ENCODE measurements at regions of chr6 and their contacts with region 1.

Region 1: GRCh38 chr6:111259089-111259831 is 172.0 kb downstream of the SLC16A10 start:
- DNase-seq: peak; percentile 98 to 100 (median 99)
- ATAC-seq: peak; percentile 96
- H3K4me3 ChIP-seq: peak overlapping the region; percentile 68 to 82
- H3K4me3 Mint-ChIP-seq: peak overlapping the region; percentile 86
- H3K27ac ChIP-seq: peak overlapping the region; percentile 90
- H3K27ac Mint-ChIP-seq: peak overlapping the region; percentile 90
- H3K4me1 ChIP-seq: peaks cover 18% of the 10 kb centered on the region
- H3K4me1 Mint-ChIP-seq: peaks cover 28% of the 10 kb centered on the region
- H3K27me3 ChIP-seq: no peaks in the 10 kb centered on the region
- H3K27me3 Mint-ChIP-seq: no peaks in the 10 kb centered on the region
- CTCF ChIP-seq: peak; percentile 80

Region 2: GRCh38 chr6:109690737-109691621 is 1568.3 kb before region 1 on chr6 and contains the starts of genes AK9 and FIG4:
- CTCF ChIA-PET with region 1: no interaction called
- POLR2A ChIA-PET with region 1: no interaction called
- intact Hi-C with region 1: loop called in 1 of 2 experiments (anchors 10 kb)
- DNase-seq: peak; percentile 68 to 93 (median 90)
- ATAC-seq: peak; percentile 96
- H3K4me3 ChIP-seq: peak within 1 kb of the TSS; percentile 85 to 91
- H3K4me3 Mint-ChIP-seq: peak within 1 kb of the TSS; percentile 93
- H3K27ac ChIP-seq: peak within 1 kb of the TSS; percentile 81 to 91
- H3K27ac Mint-ChIP-seq: peak within 1 kb of the TSS; percentile 98
- H3K4me1 ChIP-seq: peaks cover 22% of the 10 kb centered on the region
- H3K4me1 Mint-ChIP-seq: peaks cover 27% of the 10 kb centered on the region
- H3K27me3 ChIP-seq: no peaks in the 10 kb centered on the region
- H3K27me3 Mint-ChIP-seq: no peaks in the 10 kb centered on the region
- CTCF ChIP-seq: no peak
- total RNA-seq, gene AK9: 5.1 to 6.5 TPM
- total RNA-seq, gene FIG4: 2.3 TPM

Region 3: DNA sequence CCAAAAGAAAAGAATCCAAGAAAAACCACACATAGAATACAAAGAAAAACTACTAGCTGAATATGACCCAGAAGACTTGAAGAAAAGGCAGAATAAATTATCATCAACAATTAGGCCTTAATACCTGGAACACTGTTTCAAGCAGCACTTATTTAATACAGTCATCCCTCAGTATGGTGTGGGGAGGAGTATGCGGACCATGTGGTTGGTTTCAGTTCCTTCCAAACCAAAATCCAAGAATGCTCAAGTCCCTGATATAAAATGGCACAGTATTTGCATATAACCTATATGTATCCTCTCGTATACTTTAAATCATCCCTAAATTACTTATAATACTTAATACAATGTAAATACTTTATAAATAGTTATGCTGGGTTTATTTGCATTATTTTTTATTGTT is 460.1 kb before region 1 on chr6:
- CTCF ChIA-PET with region 1: no interaction called
- POLR2A ChIA-PET with region 1: no interaction called
- intact Hi-C with region 1: no loop called
- DNase-seq: no peak
- ATAC-seq: no peak
- H3K4me3 ChIP-seq: no peak overlapping the region
- H3K4me3 Mint-ChIP-seq: no peak overlapping the region
- H3K27ac ChIP-seq: no peak overlapping the region
- H3K27ac Mint-ChIP-seq: no peak overlapping the region
- H3K4me1 ChIP-seq: no peaks in the 10 kb centered on the region
- H3K4me1 Mint-ChIP-seq: peaks cover 20% of the 10 kb centered on the region
- H3K27me3 ChIP-seq: no peaks in the 10 kb centered on the region
- H3K27me3 Mint-ChIP-seq: no peaks in the 10 kb centered on the region
- CTCF ChIP-seq: no peak

Region 4: GRCh38 chr6:110958329-110959192 is 300.7 kb before region 1 on chr6 and contains the start of gene GTF3C6:
- CTCF ChIA-PET with region 1: no interaction called
- POLR2A ChIA-PET with region 1: interaction called, 3 read pairs
- intact Hi-C with region 1: loop called in 1 of 2 experiments (anchors 1 kb)
- DNase-seq: peak; percentile 81 to 95 (median 93)
- ATAC-seq: peak; percentile 99
- H3K4me3 ChIP-seq: peak within 1 kb of the TSS; percentile 97 to 99
- H3K4me3 Mint-ChIP-seq: peak within 1 kb of the TSS; percentile 100
- H3K27ac ChIP-seq: peak within 1 kb of the TSS; percentile 91 to 92
- H3K27ac Mint-ChIP-seq: peak within 1 kb of the TSS; percentile 100
- H3K4me1 ChIP-seq: peaks cover 5% of the 10 kb centered on the region
- H3K4me1 Mint-ChIP-seq: peaks cover 21% of the 10 kb centered on the region
- H3K27me3 ChIP-seq: no peaks in the 10 kb centered on the region
- H3K27me3 Mint-ChIP-seq: peaks cover 5% of the 10 kb centered on the region
- CTCF ChIP-seq: no peak
- total RNA-seq, gene GTF3C6: 25.0 to 26.3 TPM

Region 5: GRCh38 chr6:111269401-111269970 is 10.2 kb after region 1 on chr6:
- CTCF ChIA-PET with region 1: interaction called, 29 read pairs
- POLR2A ChIA-PET with region 1: interaction called, 6 read pairs
- intact Hi-C with region 1: no loop called
- DNase-seq: no peak
- ATAC-seq: no peak
- H3K4me3 ChIP-seq: no peak overlapping the region
- H3K4me3 Mint-ChIP-seq: no peak overlapping the region
- H3K27ac ChIP-seq: no peak overlapping the region
- H3K27ac Mint-ChIP-seq: no peak overlapping the region
- H3K4me1 ChIP-seq: no peaks in the 10 kb centered on the region
- H3K4me1 Mint-ChIP-seq: peaks cover 20% of the 10 kb centered on the region
- H3K27me3 ChIP-seq: no peaks in the 10 kb centered on the region
- H3K27me3 Mint-ChIP-seq: no peaks in the 10 kb centered on the region
- CTCF ChIP-seq: no peak

Region 6: DNA sequence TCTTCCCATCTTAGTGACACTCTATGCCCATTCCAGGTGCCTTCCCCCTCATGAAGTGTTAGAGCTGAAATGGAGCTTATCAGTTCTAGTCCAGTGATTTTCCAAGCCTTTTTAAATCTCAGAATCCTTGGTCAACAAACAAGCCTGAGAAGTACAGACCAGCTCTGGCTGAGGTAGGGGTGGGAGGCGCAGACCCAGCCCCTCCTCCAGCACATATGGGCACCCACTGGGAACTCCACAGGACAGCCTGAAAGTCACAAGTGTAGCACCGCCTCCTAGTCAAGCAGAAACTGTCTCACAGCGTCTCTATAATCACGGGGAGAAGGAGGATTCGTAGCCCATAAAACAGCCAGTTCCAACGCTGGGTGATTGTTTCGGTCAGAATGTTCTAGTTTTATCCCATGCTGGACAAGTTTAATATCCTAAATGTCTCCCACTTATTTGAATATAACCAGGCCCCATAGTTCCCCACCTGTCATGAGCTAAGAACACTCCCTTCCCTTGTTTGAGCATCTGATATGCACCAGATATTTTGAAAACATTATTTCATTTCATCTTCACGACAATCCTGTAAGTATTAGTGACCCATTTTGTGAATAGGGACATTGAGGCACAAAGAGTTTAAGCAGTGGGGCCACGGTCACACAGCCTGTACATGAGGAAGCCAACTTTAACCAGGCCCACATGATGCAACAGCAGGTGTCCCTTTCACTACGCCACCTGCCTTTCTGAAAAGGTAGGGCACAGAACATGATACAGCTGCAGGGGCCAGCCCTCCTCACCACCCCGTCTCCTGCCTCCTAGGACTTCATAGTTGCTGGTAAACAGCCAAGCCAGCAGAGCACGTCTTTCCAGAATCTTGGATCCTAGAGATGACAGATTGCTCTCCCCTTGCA is 306.3 kb after region 1 on chr6:
- CTCF ChIA-PET with region 1: no interaction called
- POLR2A ChIA-PET with region 1: no interaction called
- intact Hi-C with region 1: loop called in 1 of 2 experiments (anchors 2 kb)
- DNase-seq: peak in 2 of 9 experiments; percentile 22 to 44
- ATAC-seq: peak; percentile 71
- H3K4me3 ChIP-seq: no peak overlapping the region
- H3K4me3 Mint-ChIP-seq: no peak overlapping the region
- H3K27ac ChIP-seq: no peak overlapping the region
- H3K27ac Mint-ChIP-seq: no peak overlapping the region
- H3K4me1 ChIP-seq: peaks cover 23% of the 10 kb centered on the region
- H3K4me1 Mint-ChIP-seq: peaks cover 42% of the 10 kb centered on the region
- H3K27me3 ChIP-seq: no peaks in the 10 kb centered on the region
- H3K27me3 Mint-ChIP-seq: no peaks in the 10 kb centered on the region
- CTCF ChIP-seq: no peak

Region 7: GRCh38 chr6:111709615-111710398 is 450.5 kb after region 1 on chr6:
- CTCF ChIA-PET with region 1: no interaction called
- POLR2A ChIA-PET with region 1: no interaction called
- intact Hi-C with region 1: loop called in 1 of 2 experiments (anchors 5 kb)
- DNase-seq: peak; percentile 29 to 85 (median 57)
- ATAC-seq: peak; percentile 83
- H3K4me3 ChIP-seq: no peak overlapping the region
- H3K4me3 Mint-ChIP-seq: no peak overlapping the region
- H3K27ac ChIP-seq: peak overlapping the region in 1 of 2 experiments; percentile 48
- H3K27ac Mint-ChIP-seq: peak overlapping the region; percentile 85
- H3K4me1 ChIP-seq: peaks cover 30% of the 10 kb centered on the region
- H3K4me1 Mint-ChIP-seq: peaks cover 52% of the 10 kb centered on the region
- H3K27me3 ChIP-seq: no peaks in the 10 kb centered on the region
- H3K27me3 Mint-ChIP-seq: no peaks in the 10 kb centered on the region
- CTCF ChIP-seq: peak; percentile 80

Region 8: DNA sequence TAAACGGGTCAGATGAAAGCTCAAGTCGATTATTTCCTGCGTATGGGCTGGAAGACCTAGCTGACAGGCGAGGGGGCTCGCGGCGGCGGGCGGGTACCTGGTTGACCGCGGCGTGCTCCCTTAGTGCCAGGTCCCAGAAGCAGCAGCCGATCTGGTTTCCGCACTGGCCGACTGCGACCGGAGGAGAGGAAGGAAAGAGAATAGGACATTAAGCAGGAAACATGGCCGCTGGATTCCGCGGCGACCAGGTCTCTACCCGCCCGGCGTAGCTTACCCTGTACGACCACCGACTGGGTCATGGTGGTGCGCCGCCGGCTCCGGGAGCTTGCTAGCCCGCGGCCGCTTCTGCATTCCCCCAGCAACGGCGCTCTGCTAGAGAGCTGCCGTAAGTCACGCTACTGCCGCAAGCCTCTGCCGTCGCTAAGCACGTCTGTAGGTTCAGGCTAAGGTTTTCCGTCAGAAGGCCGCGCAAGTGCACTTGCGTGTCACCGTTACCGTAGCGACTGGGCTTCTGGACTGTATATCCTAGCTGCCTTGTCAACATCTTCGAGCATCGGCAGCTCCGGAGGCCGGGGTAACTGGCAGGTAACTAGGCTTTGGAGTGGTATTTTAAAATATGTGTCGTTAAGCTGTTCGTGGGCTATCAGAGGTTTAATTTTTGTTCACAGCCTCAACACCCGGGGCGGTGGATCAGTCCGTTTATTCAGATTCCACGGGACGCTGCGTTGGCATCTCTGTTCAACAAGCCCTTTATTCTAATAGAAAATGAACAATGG is 828.1 kb after region 1 on chr6 and contains the starts of genes FAM229B and TUBE1:
- CTCF ChIA-PET with region 1: no interaction called
- POLR2A ChIA-PET with region 1: interaction called, 7 read pairs
- intact Hi-C with region 1: loop called (anchors 1 to 5 kb)
- DNase-seq: peak; percentile 82 to 97 (median 89)
- ATAC-seq: peak; percentile 97
- H3K4me3 ChIP-seq: peak within 1 kb of the TSS; percentile 75 to 80
- H3K4me3 Mint-ChIP-seq: no peak within 1 kb of the TSS
- H3K27ac ChIP-seq: peak within 1 kb of the TSS; percentile 89 to 97
- H3K27ac Mint-ChIP-seq: no peak within 1 kb of the TSS
- H3K4me1 ChIP-seq: peaks cover 9% of the 10 kb centered on the region
- H3K4me1 Mint-ChIP-seq: peaks cover 12% of the 10 kb centered on the region
- H3K27me3 ChIP-seq: no peaks in the 10 kb centered on the region
- H3K27me3 Mint-ChIP-seq: peaks cover 3% of the 10 kb centered on the region
- CTCF ChIP-seq: no peak
- total RNA-seq, gene FAM229B: 3.1 to 3.3 TPM
- total RNA-seq, gene TUBE1: 25.6 to 30.5 TPM

Measured in CD8-positive, alpha-beta T cell (primary cell).